K562 (cell line): ENCODE measurements at regions of chr7 and their contacts with region 1.

Region 1: DNA sequence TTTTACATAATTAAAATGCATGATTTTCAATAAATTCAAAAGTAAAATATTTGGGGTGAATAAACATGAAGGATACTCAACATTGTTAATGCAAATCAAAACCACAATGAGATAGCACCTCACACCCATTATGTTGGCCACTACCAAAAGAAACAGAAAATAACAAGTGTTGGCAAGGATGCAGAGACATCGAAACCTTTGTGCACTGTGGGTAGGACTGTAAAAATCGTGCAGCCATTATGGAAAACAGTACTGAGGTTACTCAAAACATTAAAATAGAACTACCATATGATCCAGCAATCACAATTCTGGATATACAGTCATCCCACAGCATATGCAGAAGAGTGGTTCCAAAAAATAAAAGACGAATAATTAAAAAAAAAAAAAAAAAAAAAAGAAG is 13.1 kb downstream of the EZH2 start:
- DNase-seq: no peak
- ATAC-seq: no peak
- H3K4me3 ChIP-seq: no peak overlapping the region
- H3K27ac ChIP-seq: no peak overlapping the region
- H3K4me1 ChIP-seq: peaks cover 31 to 43% of the 10 kb centered on the region in 2 experiments
- H3K27me3 ChIP-seq: no peaks in the 10 kb centered on the region
- CTCF ChIP-seq: no peak
- EP300 ChIP-seq: no peak
- POLR2A ChIP-seq: no peak
- RAD21 ChIP-seq: no peak

Region 2: DNA sequence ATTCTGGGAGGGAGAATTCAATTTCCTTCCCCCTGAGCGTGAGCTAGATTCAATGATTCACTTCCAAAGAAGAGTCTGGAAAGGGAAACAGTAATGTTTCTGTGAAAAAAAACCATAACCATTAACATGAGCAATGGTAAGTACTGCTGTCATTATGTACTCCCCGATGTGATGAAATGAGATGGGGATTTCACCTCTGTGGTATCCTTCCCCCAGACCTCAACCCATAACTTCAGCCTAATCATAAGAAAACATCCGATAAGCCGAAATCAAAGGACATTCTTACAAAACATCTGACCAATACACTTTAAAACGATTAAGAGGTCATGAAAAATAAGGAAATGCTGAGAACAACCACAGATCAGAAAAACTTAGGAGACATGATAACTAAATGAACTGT is 14.1 kb before region 1 on chr7:
- CTCF ChIA-PET with region 1: no interaction called
- POLR2A ChIA-PET with region 1: interaction called, 10 read pairs
- in situ Hi-C with region 1: no loop called
- intact Hi-C with region 1: loop called (anchors 2 kb)
- DNase-seq: peak in 1 of 4 experiments; percentile 52
- ATAC-seq: peak; percentile 14
- H3K4me3 ChIP-seq: no peak overlapping the region
- H3K27ac ChIP-seq: no peak overlapping the region; the same call in 2 of the 3 replicates
- H3K4me1 ChIP-seq: peaks cover 0 to 24% of the 10 kb centered on the region in 2 experiments; a peak in 4 of 5 replicates
- H3K27me3 ChIP-seq: no peaks in the 10 kb centered on the region
- CTCF ChIP-seq: no peak
- EP300 ChIP-seq: no peak
- POLR2A ChIP-seq: no peak
- RAD21 ChIP-seq: no peak